HCT116 (cell line): ENCODE measurements at regions of chr2 and their contacts with region 1.

Region 1: DNA sequence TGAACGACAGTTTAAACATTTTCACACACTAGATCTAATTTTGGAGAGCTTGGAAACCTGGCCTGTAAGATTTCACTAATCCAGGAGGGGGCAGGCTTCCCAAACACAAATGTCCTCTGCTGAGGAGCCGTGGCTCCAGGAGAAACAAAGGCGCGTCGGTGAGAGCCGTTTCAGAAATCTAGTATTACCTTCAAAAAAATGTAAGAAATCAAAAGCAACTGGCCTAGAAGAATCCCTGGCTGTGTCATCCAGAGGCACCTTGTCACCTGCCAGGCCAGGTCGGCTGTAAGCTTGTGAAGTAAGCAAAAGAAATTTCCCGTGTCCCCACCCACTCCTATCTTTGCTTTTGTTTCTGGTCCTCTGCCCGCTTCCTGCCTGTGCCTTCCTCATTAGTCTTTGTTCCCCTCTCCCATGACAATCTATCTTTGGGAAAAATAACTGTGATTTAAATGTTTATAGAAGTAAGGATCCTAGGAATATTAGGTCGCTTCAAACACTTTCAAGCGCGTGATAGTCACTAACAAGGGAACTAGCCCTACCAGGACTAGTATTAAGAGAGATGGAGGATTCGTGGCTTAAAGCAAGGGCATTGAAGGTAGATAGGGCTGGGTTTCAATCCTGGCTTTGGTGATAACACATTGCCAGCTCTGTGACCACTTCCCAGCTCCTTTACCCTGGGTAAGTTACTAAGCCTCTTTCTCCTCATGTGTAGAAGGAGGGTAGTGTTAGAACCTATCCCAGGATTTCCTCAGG is 99.5 kb upstream of the STK39 start:
- DNase-seq: peak; percentile 53
- ATAC-seq: peak; percentile 81
- H3K4me3 ChIP-seq: peak overlapping the region; percentile 53 to 64
- H3K27ac ChIP-seq: no peak overlapping the region
- H3K4me1 ChIP-seq: peaks cover 0 to 19% of the 10 kb centered on the region in 2 experiments; a peak in 2 of 4 replicates
- H3K27me3 ChIP-seq: no peaks in the 10 kb centered on the region
- CTCF ChIP-seq: peak; percentile 67 to 83 (median 80)
- POLR2A ChIP-seq: no peak
- RAD21 ChIP-seq: peak; percentile 90

Region 2: DNA sequence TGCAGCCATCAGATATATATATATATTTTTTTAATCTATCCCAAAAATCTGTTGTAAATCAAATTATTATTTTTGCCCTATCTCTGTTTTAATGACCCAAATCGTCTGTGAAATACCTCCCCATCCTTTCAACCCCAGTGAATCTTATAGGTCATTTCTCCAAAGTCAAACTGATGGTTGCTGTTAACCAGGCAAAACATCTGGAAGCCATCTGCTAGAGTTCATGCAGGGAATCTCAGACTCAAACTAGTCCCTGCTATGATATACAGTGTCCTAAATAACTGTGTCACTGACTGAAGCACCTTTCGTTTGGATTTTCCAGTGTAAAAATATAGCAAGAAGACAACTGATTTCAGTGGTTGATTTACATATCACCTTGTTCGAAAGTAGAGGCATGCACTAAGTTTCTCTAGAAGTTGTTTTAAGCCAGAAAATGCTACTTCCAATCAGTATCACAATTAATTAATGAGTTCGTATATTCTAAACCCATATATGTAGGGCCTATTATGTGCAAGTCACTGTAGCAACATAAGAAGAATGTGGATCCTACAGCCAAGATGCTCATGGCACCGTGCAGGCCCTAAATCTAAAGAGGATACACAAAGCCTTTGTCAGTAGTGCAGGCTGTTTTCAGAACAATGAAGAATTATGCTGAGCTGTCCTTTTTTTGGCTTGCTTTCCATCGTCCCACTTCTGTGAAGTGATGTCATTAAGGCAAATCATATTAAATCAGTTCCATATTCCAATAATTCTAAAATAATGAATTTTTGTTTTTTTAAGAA is 665.5 kb before region 1 on chr2:
- CTCF ChIA-PET with region 1: no interaction called
- POLR2A ChIA-PET with region 1: no interaction called
- RAD21 ChIA-PET with region 1: no interaction called
- intact Hi-C with region 1: no loop called
- DNase-seq: no peak
- ATAC-seq: no peak
- H3K4me3 ChIP-seq: no peak overlapping the region
- H3K27ac ChIP-seq: no peak overlapping the region
- H3K4me1 ChIP-seq: no peaks in the 10 kb centered on the region
- H3K27me3 ChIP-seq: no peaks in the 10 kb centered on the region
- CTCF ChIP-seq: no peak
- POLR2A ChIP-seq: no peak
- RAD21 ChIP-seq: no peak

Region 3: GRCh38 chr2:168336864-168337263 is 10.0 kb before region 1 on chr2:
- CTCF ChIA-PET with region 1: interaction called, 11 read pairs
- POLR2A ChIA-PET with region 1: interaction called, 4 read pairs
- RAD21 ChIA-PET with region 1: no interaction called
- intact Hi-C with region 1: no loop called
- DNase-seq: peak; percentile 87
- ATAC-seq: peak; percentile 100
- H3K4me3 ChIP-seq: peak overlapping the region in 1 of 2 experiments; percentile 0; a peak in 1 of 4 replicates
- H3K27ac ChIP-seq: no peak overlapping the region
- H3K4me1 ChIP-seq: peaks cover 0 to 17% of the 10 kb centered on the region in 2 experiments; a peak in 2 of 4 replicates
- H3K27me3 ChIP-seq: no peaks in the 10 kb centered on the region
- CTCF ChIP-seq: peak; percentile 74 to 83 (median 78); a peak in 5 of 6 replicates
- POLR2A ChIP-seq: no peak
- RAD21 ChIP-seq: peak; percentile 91

Region 4: GRCh38 chr2:168687314-168687713 is 340.4 kb after region 1 on chr2:
- CTCF ChIA-PET with region 1: interaction called, 8 read pairs
- POLR2A ChIA-PET with region 1: no interaction called
- RAD21 ChIA-PET with region 1: no interaction called
- intact Hi-C with region 1: loop called (anchors 1 kb)
- DNase-seq: no peak
- ATAC-seq: no peak; the same call in 1 of the 2 replicates
- H3K4me3 ChIP-seq: no peak overlapping the region
- H3K27ac ChIP-seq: no peak overlapping the region
- H3K4me1 ChIP-seq: no peaks in the 10 kb centered on the region
- H3K27me3 ChIP-seq: no peaks in the 10 kb centered on the region
- CTCF ChIP-seq: peak in 2 of 3 experiments; percentile 22; a peak in 2 of 6 replicates
- POLR2A ChIP-seq: no peak
- RAD21 ChIP-seq: peak; percentile 71

Region 5: DNA sequence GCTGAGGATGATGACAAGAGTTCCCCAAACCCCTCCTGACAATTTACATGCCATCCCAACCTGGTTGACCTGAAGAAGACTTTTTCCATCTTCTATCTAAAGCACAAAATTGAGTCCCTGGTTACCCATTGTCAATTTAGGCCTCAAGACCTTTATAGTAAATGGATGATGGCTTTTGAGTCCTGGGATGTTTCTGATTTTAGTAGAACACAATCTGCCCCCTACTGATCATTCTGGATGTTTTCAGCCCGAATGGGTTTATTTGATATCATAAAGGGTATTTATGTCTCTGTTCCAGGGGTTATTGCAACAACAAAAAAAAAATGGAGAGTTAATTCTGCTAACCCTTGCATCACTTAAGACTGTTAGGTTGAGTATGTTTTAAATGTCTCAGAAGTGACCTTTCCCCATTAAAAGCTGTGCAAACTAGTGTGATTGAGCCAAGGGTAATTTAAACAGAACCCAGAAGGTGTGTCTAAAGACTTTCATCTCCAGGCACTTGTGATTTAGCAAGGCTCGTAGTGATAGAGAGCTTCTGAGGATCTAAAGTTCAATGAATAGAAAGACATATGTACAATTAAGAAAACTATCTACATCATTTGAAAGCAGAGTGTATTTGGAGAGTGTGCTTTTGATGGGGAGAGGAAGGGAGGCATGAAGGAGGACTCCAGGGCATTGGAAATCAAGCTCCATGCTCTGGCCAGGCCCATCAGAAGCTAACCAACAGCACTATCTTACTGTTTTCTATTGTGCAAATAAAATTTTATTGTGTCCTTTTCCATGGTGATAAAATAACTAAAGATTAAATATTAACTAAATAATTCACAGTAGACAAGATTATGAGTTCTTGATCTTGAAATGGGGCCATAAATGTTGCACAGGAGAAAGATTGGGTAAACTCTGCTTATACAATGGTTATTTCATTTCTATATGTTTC is 358.9 kb after region 1 on chr2:
- CTCF ChIA-PET with region 1: no interaction called
- POLR2A ChIA-PET with region 1: no interaction called
- RAD21 ChIA-PET with region 1: no interaction called
- intact Hi-C with region 1: loop called (anchors 5 kb)
- DNase-seq: no peak
- ATAC-seq: no peak
- H3K4me3 ChIP-seq: no peak overlapping the region
- H3K27ac ChIP-seq: no peak overlapping the region
- H3K4me1 ChIP-seq: no peaks in the 10 kb centered on the region
- H3K27me3 ChIP-seq: no peaks in the 10 kb centered on the region
- CTCF ChIP-seq: peak; percentile 24 to 48 (median 35); a peak in 4 of 6 replicates
- POLR2A ChIP-seq: no peak
- RAD21 ChIP-seq: peak; percentile 57

Region 6: DNA sequence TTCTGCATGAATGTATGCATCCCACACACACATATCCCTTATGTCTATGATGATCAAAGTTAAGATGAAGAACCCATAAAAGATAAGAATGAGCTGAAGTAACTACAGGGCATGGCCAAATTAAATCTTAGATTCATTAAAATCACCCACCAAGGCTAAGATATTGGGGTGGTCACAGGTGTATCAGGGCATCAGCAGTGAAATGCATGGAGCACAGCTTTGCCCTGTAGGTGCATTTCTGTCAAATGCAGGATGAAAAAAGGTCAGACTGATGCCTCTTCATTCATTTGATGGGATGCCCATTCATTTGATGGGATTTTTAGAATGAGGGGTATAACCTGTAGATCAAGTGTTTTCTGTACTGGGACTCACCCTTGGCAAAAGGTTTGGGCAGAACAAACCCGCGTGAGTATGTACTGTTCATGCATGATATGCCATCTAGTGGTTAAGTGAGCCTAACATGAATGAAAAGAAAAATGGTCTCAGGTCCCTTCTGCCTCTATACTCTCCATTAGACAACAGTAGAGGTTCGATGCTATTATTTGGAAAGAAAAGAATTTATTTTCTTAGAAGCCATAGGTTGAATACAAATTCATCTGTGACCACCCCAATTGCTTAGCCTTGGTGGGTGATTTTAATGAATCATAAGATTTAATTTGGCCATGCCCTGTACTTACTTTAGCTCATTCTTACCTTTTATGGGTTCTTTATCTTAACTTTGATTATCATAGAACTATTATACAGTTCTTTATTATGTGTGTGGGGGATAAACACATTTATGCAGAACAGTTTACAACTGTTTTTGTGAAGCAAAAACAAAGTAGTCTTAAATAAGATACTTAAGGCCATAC is 412.3 kb after region 1 on chr2:
- CTCF ChIA-PET with region 1: interaction called, 6 read pairs
- POLR2A ChIA-PET with region 1: no interaction called
- RAD21 ChIA-PET with region 1: no interaction called
- intact Hi-C with region 1: loop called (anchors 1 kb)
- DNase-seq: peak; percentile 21
- ATAC-seq: peak; percentile 93
- H3K4me3 ChIP-seq: no peak overlapping the region
- H3K27ac ChIP-seq: no peak overlapping the region
- H3K4me1 ChIP-seq: no peaks in the 10 kb centered on the region
- H3K27me3 ChIP-seq: no peaks in the 10 kb centered on the region
- CTCF ChIP-seq: peak; percentile 52 to 67 (median 61); a peak in 5 of 6 replicates
- POLR2A ChIP-seq: no peak
- RAD21 ChIP-seq: peak; percentile 74

Region 7: GRCh38 chr2:168920504-168921157 is 573.7 kb after region 1 on chr2:
- CTCF ChIA-PET with region 1: interaction called, 3 read pairs
- POLR2A ChIA-PET with region 1: no interaction called
- RAD21 ChIA-PET with region 1: no interaction called
- intact Hi-C with region 1: loop called (anchors 2 kb)
- DNase-seq: peak; percentile 13
- ATAC-seq: peak; percentile 60
- H3K4me3 ChIP-seq: no peak overlapping the region
- H3K27ac ChIP-seq: no peak overlapping the region
- H3K4me1 ChIP-seq: no peaks in the 10 kb centered on the region
- H3K27me3 ChIP-seq: no peaks in the 10 kb centered on the region
- CTCF ChIP-seq: peak; percentile 39 to 73 (median 68)
- POLR2A ChIP-seq: no peak
- RAD21 ChIP-seq: peak; percentile 80

Region 8: GRCh38 chr2:169018390-169018789 is 671.5 kb after region 1 on chr2:
- CTCF ChIA-PET with region 1: no interaction called
- POLR2A ChIA-PET with region 1: no interaction called
- RAD21 ChIA-PET with region 1: no interaction called
- intact Hi-C with region 1: no loop called
- DNase-seq: no peak
- ATAC-seq: no peak
- H3K4me3 ChIP-seq: no peak overlapping the region
- H3K27ac ChIP-seq: no peak overlapping the region
- H3K4me1 ChIP-seq: peaks cover 0 to 7% of the 10 kb centered on the region in 2 experiments; a peak in 2 of 4 replicates
- H3K27me3 ChIP-seq: no peaks in the 10 kb centered on the region
- CTCF ChIP-seq: no peak
- POLR2A ChIP-seq: no peak
- RAD21 ChIP-seq: no peak